Activated naive CD4-positive, alpha-beta T cell treated with anti-CD3 and anti-CD28 coated beads for 36 hours (primary cell): ENCODE measurements at regions of chr11 and their contacts with region 1.

Region 1: DNA sequence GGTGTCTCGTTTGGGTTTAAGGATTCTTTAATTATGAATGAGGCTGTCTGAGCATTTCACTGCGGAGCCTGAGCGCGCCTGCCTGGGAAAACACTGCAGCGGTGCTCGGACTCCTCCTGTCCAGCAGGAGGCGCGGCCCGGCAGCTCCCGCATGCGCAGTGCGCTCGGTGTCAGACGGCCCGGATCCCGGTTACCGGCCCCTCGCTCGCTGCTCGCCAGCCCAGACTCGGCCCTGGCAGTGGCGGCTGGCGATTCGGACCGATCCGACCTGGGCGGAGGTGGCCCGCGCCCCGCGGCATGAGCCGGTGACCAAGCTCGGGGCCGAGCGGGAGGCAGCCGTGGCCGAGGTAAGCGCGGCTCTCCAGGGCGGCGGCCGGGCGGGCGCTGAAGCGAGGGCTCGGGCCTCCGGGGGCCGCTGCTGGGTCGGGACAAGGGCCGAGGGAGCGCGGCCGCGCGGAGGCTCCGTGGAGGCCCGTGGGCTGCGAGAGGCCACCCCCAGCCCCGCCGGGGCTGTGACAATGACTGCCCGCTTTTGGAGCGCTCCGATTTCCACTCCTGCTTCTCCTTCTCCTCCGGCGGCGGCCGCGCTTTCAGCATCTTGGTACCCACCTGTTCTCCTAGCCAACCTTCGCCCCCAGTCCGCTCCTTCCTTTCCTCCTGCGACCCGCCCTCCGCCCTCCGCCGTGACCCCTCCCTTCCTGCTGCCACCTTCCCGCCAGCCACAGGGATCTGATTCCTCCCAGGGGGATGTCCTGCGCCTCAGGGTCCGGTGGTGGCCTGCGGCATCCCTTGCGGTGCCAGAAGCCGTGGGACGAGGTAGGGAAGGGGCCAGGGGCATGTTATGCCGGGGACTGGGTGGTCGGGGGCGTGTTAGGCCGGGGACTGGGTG is at the start of gene EXT2:
- DNase-seq: peak; percentile 84
- H3K4me3 Mint-ChIP-seq: peak within 1 kb of the TSS; percentile 87
- H3K27ac Mint-ChIP-seq: no peak within 1 kb of the TSS
- H3K4me1 Mint-ChIP-seq: peaks cover 24% of the 10 kb centered on the region
- H3K27me3 Mint-ChIP-seq: no peaks in the 10 kb centered on the region
- total RNA-seq, gene EXT2: 23.8 to 26.2 TPM

Region 2: GRCh38 chr11:43895601-43896000 is 200.1 kb before region 1 on chr11:
- CTCF ChIA-PET with region 1: interaction called, 13 read pairs
- intact Hi-C with region 1: no loop called
- DNase-seq: no peak
- H3K4me3 Mint-ChIP-seq: no peak overlapping the region
- H3K27ac Mint-ChIP-seq: no peak overlapping the region
- H3K4me1 Mint-ChIP-seq: no peaks in the 10 kb centered on the region
- H3K27me3 Mint-ChIP-seq: no peaks in the 10 kb centered on the region

Region 3: DNA sequence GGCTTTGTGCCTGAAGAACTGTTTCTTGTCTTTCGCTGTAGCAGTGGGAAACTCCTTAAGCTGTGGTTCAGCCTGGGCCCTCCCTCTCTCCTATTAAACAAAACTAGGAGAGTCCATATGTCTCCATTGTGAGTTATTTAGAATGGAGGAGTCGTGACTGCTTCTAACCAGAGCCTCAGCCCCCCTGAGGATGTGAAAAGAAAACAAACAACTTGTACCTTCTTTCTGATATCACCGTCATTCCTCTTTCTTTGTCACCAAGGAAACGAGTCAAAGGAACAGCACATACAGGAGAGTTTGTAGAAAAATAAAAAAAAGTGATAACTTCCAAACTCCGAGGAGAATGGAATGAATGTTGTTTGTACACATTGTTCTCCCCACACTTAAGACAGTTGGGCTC is 11.8 kb before region 1 on chr11:
- CTCF ChIA-PET with region 1: interaction called, 24 read pairs
- intact Hi-C with region 1: no loop called
- DNase-seq: no peak
- H3K4me3 Mint-ChIP-seq: no peak overlapping the region
- H3K27ac Mint-ChIP-seq: no peak overlapping the region
- H3K4me1 Mint-ChIP-seq: no peaks in the 10 kb centered on the region
- H3K27me3 Mint-ChIP-seq: no peaks in the 10 kb centered on the region

Region 4: GRCh38 chr11:44120169-44120568 is 24.4 kb after region 1 on chr11:
- CTCF ChIA-PET with region 1: interaction called, 9 read pairs
- intact Hi-C with region 1: loop called (anchors 2 kb)
- DNase-seq: no peak
- H3K4me3 Mint-ChIP-seq: no peak overlapping the region
- H3K27ac Mint-ChIP-seq: no peak overlapping the region
- H3K4me1 Mint-ChIP-seq: no peaks in the 10 kb centered on the region
- H3K27me3 Mint-ChIP-seq: no peaks in the 10 kb centered on the region

Region 5: DNA sequence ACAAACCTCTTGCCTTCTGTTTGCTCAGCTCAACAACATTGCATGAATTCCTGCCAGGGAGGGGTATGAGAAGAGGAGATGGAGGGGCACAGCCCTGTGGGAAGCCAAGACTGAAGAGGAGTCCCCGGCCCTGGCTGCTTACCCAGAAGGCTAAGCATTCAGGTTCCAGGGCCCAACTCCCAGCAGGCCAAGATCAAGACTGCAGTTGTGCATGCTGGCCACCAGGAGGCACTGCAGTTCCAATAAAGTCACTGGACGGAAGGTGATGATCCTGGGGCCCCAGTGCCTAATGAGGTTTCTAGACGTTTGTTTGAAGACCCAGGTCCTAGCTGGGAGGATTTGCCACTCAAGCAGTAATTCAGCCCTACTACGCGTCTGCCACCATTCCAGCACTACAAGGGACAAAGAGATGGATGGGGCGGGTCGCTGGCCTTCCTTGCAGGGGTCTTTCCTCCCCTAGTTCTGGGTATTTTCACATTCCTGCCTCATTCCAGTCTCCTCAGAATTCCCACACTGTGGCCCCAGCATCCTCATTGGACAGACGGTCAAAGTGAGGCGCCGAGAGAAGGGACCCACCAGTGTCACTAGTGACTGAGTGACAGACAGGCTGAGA is 190.6 kb after region 1 on chr11:
- CTCF ChIA-PET with region 1: interaction called, 4 read pairs
- intact Hi-C with region 1: loop called (anchors 1 kb)
- DNase-seq: peak; percentile 77
- H3K4me3 Mint-ChIP-seq: no peak overlapping the region
- H3K27ac Mint-ChIP-seq: no peak overlapping the region
- H3K4me1 Mint-ChIP-seq: no peaks in the 10 kb centered on the region
- H3K27me3 Mint-ChIP-seq: no peaks in the 10 kb centered on the region

Region 6: GRCh38 chr11:44611687-44612434 is 516.1 kb after region 1 on chr11:
- CTCF ChIA-PET with region 1: no interaction called
- intact Hi-C with region 1: loop called (anchors 10 kb)
- DNase-seq: peak; percentile 78
- H3K4me3 Mint-ChIP-seq: no peak overlapping the region
- H3K27ac Mint-ChIP-seq: peak overlapping the region; percentile 71
- H3K4me1 Mint-ChIP-seq: peaks cover 82% of the 10 kb centered on the region
- H3K27me3 Mint-ChIP-seq: no peaks in the 10 kb centered on the region